K562 (cell line): ENCODE measurements at regions of chr20 and their contacts with region 1.

Region 1: GRCh38 chr20:49338061-49338460 is 60.2 kb upstream of the ZNFX1 start:
- DNase-seq: no peak
- ATAC-seq: no peak
- H3K4me3 ChIP-seq: no peak overlapping the region
- H3K27ac ChIP-seq: no peak overlapping the region
- H3K4me1 ChIP-seq: peaks cover 0 to 4% of the 10 kb centered on the region in 2 experiments; a peak in 2 of 5 replicates
- H3K27me3 ChIP-seq: peaks cover 5 to 31% of the 10 kb centered on the region in 2 experiments
- CTCF ChIP-seq: no peak
- EP300 ChIP-seq: no peak
- POLR2A ChIP-seq: no peak
- RAD21 ChIP-seq: no peak

Region 2: GRCh38 chr20:49054056-49054643 is 283.9 kb before region 1 on chr20:
- CTCF ChIA-PET with region 1: no interaction called
- POLR2A ChIA-PET with region 1: no interaction called
- in situ Hi-C with region 1: no loop called
- intact Hi-C with region 1: no loop called
- DNase-seq: peak in 1 of 4 experiments; percentile 14
- ATAC-seq: peak; percentile 38
- H3K4me3 ChIP-seq: no peak overlapping the region
- H3K27ac ChIP-seq: peak overlapping the region; percentile 27; the same call in 1 of the 3 replicates
- H3K4me1 ChIP-seq: peaks cover 3 to 7% of the 10 kb centered on the region in 2 experiments; a peak in 2 of 5 replicates
- H3K27me3 ChIP-seq: no peaks in the 10 kb centered on the region
- CTCF ChIP-seq: no peak
- EP300 ChIP-seq: no peak
- POLR2A ChIP-seq: no peak
- RAD21 ChIP-seq: no peak

Region 3: DNA sequence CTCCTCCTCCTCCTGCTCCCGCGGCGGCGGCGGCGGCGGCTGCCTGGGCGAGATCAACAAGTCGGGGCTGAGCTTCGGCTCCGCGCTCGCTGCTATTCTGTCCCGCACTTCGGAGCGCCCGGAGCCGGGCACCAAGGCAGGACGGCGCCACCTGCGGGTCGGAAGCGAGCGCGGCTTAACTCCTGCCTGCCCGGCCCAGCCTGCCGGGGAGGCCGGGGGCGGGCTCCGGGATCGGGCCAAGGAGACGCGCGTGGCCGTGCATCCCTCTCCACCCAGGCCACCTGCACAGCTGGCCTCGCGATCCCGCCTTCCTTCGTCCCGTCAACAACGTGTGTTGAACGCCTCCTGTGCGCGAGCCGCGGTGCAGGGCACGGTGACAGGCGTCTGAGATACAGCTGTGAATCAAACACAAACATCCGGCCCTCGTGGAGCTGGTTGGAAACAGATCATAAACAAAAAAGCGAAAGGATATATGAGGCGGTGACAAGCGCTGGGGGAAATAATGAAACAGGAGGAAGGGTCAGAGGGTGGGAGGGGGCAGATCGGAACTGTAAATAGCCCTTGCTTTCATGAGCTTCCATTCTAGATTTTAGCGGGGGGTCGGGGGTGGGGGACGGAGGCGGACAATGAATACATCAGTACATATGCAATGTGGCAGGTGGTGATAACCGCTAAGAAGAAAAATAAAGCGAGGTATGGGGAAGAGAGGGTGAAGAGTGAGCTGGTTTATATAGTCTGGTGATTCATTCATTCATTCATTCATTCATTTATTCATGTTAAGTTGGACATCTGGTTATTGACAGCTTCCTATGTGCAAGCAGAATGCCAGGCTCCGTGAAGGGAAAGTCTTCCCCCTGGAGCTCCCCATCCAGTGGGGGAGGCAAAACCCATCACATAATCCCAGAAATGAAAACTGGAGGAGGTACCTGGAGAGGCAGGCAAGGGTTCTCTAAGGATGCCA is 146.4 kb after region 1 on chr20:
- CTCF ChIA-PET with region 1: interaction called, 40 read pairs
- POLR2A ChIA-PET with region 1: no interaction called
- in situ Hi-C with region 1: no loop called
- intact Hi-C with region 1: loop called (anchors 1 kb)
- DNase-seq: peak; percentile 70 to 73 (median 71)
- ATAC-seq: peak; percentile 99
- H3K4me3 ChIP-seq: no peak overlapping the region; the same call in 1 of the 2 replicates
- H3K27ac ChIP-seq: no peak overlapping the region
- H3K4me1 ChIP-seq: peaks cover 0 to 16% of the 10 kb centered on the region in 2 experiments; a peak in 2 of 5 replicates
- H3K27me3 ChIP-seq: peaks cover 2 to 17% of the 10 kb centered on the region in 2 experiments; a peak in 1 of 5 replicates
- CTCF ChIP-seq: peak; percentile 67 to 91 (median 75)
- EP300 ChIP-seq: no peak
- POLR2A ChIP-seq: no peak
- RAD21 ChIP-seq: peak; percentile 64 to 81

Region 4: DNA sequence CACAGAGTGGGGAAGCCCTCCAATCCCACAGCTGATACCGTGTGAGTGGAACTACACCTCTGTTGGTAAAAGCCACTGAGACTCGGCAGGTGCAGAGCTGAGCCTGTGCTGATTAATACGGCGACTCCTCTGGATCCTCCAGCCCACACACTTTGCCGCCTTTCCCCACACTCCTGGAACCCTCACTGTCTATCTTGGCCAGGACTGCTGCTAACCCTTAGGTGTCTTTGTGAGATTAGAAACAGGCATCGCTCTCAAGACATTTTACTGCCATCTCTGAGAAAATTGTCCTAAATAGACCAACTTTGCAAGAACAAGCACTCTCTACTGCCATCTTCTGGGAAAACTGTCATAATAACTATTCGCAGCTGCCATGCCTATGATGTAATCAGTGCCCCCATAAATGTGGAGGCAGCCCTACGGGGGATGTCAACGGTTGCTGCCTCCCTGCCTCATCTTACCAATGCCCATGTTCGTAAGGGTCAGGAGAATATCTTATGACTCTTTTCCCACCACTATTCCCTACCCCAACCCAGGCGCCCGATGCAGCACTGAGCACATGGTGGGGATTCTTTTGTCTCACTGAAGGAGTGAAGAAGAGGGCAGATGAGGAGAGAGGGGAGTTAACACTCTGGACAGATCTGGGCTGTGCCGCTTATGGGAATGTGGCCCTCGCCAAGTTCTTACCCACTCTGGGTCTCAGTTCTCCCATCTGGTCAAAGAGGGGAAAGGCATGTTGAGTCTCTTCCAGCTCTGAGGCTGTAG is 170.6 kb after region 1 on chr20:
- CTCF ChIA-PET with region 1: interaction called, 36 read pairs
- POLR2A ChIA-PET with region 1: no interaction called
- in situ Hi-C with region 1: loop called (anchors 10 kb)
- intact Hi-C with region 1: loop called (anchors 1 kb)
- DNase-seq: peak; percentile 42 to 51 (median 50)
- ATAC-seq: peak; percentile 84
- H3K4me3 ChIP-seq: no peak overlapping the region
- H3K27ac ChIP-seq: no peak overlapping the region
- H3K4me1 ChIP-seq: no peaks in the 10 kb centered on the region; a peak in 1 of 5 replicates
- H3K27me3 ChIP-seq: peaks cover 15 to 39% of the 10 kb centered on the region in 2 experiments; a peak in 4 of 5 replicates
- CTCF ChIP-seq: peak; percentile 67 to 72 (median 71)
- EP300 ChIP-seq: no peak
- POLR2A ChIP-seq: no peak
- RAD21 ChIP-seq: peak; percentile 50 to 73

Region 5: DNA sequence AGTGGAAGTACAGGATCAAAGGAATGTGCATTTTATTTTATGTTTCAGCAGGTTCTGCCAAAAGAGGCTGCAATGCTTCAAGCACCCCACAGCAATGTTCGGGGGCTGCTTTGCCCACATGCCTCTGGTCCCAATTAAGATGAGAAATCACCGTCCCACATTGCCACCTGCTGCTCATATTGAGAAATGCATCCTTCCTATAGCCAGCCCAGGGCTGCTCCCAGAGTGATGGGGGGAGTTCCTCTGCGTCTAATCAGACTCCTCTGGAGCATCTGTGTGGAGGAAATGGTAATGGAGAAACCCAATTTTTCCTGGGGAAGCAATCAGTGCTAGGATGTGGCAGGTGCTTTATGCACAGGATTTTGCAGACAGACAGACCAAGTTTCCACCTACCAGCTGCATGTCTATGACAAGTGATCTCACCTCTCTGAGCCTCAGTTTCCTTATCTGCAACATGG is 196.2 kb after region 1 on chr20:
- CTCF ChIA-PET with region 1: interaction called, 98 read pairs
- POLR2A ChIA-PET with region 1: no interaction called
- in situ Hi-C with region 1: loop called (anchors 5 kb)
- intact Hi-C with region 1: loop called (anchors 1 kb)
- DNase-seq: peak; percentile 67 to 81 (median 73)
- ATAC-seq: peak; percentile 91
- H3K4me3 ChIP-seq: no peak overlapping the region
- H3K27ac ChIP-seq: no peak overlapping the region
- H3K4me1 ChIP-seq: no peaks in the 10 kb centered on the region
- H3K27me3 ChIP-seq: peaks cover 8 to 12% of the 10 kb centered on the region in 2 experiments; a peak in 3 of 5 replicates
- CTCF ChIP-seq: peak; percentile 79 to 83 (median 80)
- EP300 ChIP-seq: no peak
- POLR2A ChIP-seq: no peak
- RAD21 ChIP-seq: peak; percentile 38 to 76